ENCODE measurements at regions of chr2 and their contacts with region 1.

Region 1: GRCh38 chr2:219073413-219074129 is 12.8 kb upstream of the IHH start:
- DNase-seq: no peak
- H3K4me3 ChIP-seq: no peak overlapping the region
- H3K27me3 ChIP-seq: no peaks in the 10 kb centered on the region
- CTCF ChIP-seq: peak; percentile 65

Region 2: DNA sequence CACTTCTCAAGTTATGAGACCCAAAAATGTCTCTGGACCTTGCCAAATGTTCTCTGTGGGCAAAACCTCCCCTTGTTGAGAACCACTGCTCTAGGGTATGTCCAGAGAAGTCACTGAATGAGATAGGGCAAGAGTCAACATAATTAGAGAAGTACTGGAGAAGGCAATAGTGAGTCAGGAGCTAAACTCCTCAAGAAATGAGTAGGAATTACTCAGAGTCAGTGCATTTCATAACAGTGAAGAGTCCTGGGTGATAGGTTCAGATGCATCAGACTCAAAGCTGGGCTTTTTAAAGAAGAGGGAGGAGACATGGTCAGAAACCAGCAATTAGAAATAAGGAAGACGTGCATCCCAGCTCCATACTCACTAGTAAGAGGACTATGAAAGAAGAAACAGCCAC is 25.8 kb after region 1 on chr2:
- CTCF ChIA-PET with region 1: interaction called, 15 read pairs
- POLR2A ChIA-PET with region 1: no interaction called
- DNase-seq: peak; percentile 14
- H3K4me3 ChIP-seq: no peak overlapping the region
- H3K27me3 ChIP-seq: no peaks in the 10 kb centered on the region
- CTCF ChIP-seq: no peak

Region 3: DNA sequence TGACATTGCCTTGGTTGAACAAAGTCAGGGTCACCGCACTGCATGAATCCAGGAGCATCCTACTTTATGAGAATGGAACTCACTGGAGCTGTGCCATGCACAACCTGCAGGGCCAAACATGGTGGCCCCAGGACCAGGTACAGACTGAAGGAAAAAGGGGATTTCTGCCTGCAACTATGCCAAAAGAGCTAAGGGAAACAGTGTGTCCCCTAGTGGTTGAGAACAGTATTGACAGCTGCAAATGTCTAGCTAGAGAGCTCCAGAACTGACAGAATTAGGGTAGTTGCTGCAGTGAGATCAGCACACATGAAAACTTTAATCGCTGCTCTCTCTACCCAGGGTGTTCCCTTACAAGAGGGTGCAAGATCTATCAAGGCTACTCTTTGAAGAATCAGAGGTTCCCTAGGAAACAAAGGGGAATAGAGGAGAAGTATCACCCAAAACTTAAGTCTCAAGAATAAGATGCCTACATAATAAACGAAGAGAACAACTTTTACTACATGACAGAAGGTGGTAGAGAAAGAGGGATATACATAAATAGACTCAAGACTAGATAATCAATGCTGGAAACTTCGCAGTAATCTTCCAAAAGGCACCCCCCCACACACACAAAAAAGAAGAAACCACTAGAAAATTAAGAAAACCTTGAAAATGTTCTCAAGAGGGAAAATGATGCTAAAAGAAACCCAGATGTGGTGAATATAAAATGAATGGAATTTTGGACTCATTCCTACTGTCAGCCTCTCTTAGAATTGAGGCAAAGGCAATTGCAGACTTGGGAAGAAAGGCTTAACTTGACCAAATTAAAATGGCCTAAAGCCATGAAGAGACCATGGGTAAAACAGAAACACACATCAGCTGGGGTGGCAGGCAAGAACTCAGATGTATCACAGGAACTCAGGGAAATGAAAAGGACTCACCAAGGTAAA is 30.8 kb after region 1 on chr2:
- CTCF ChIA-PET with region 1: interaction called, 15 read pairs
- POLR2A ChIA-PET with region 1: no interaction called
- DNase-seq: peak; percentile 40
- H3K4me3 ChIP-seq: no peak overlapping the region
- H3K27me3 ChIP-seq: no peaks in the 10 kb centered on the region
- CTCF ChIP-seq: peak; percentile 80

Region 4: DNA sequence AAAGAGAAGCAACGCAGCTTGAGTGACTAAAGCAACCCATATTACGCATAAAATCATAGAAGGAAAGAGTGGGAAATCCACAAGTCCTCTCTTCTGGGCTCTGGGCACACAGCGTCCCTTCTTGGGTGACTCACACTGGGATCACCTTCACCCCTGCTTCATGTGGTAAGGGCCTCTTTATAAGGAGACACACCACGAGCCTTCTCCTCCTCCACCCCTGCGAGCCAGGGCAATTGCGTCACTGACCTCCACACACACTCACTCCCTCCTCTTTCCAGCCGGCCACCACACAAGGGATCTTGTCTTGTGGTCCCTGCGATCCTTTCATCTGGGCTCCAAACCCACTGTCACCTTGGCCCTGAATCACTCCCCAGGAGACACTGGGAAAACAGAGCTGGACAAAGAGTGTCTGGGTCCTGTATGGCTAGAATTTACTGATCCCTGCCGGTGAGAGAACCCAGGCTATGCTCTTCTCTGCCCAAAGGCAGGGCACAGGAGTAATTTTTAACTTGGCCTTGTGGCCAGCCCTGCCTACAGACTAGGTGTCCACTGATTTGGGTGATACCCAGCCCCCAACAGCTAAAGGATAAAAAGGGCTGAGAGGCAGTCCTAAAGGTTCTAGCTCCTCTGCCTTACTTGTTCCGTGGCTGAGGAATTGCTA is 51.8 kb after region 1 on chr2:
- CTCF ChIA-PET with region 1: interaction called, 156 read pairs
- POLR2A ChIA-PET with region 1: no interaction called
- DNase-seq: peak; percentile 11
- H3K4me3 ChIP-seq: no peak overlapping the region
- H3K27me3 ChIP-seq: no peaks in the 10 kb centered on the region
- CTCF ChIP-seq: no peak

Region 5: GRCh38 chr2:219142329-219142728 is 68.8 kb after region 1 on chr2:
- CTCF ChIA-PET with region 1: interaction called, 42 read pairs
- POLR2A ChIA-PET with region 1: no interaction called
- DNase-seq: peak; percentile 76
- H3K4me3 ChIP-seq: no peak overlapping the region
- H3K27me3 ChIP-seq: no peaks in the 10 kb centered on the region
- CTCF ChIP-seq: peak; percentile 59

Region 6: GRCh38 chr2:219155054-219155644 is 81.6 kb after region 1 on chr2:
- CTCF ChIA-PET with region 1: interaction called, 86 read pairs
- POLR2A ChIA-PET with region 1: no interaction called
- DNase-seq: no peak
- H3K4me3 ChIP-seq: no peak overlapping the region
- H3K27me3 ChIP-seq: no peaks in the 10 kb centered on the region
- CTCF ChIP-seq: peak; percentile 48

Region 7: DNA sequence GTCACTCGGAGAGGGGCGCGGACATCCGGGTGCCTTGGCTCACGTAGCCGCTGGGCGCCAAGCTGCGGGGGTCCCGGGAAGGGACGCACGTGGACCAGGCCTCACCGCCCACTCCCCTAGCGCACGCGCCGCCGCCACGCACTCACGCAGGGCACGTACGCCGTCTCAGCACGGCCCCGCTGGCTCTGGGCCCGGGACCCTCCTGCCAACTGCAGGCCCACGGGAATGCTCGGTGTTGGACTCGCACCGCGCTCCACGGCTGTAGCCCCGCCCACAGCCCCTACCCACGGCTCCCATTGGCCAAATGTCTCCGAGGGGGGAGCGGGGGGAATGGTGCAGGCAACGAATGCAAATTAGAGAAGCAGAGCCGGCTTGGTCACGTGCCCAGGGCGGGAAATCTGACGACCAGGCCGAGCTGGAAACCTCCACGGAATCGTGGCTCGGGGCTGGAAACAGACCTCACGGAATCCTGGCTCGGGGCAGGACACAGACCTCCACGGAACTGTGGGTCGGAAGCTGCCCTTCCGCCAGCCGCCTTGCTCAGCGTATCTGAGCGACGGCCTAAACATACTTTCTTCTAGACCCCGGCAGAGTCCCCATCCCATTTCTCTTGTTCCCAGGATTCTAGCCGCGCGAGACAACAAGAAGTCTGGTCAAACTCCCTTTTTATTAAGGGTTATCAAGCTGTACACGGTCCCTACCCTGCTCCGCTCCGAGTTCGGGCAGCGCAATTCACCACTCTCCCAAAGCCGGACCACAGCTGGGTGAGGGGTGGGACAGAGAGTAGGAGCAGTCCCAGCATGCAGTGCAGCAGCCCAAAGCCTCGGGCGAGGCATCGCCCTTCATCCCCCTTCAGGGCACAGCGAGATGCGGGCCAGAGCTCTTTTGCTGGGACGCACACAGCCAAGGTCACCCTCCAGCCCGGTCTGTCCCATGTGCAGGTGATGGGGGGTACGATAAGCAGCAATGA is 145.4 kb after region 1 on chr2 and contains the start of gene ABCB6:
- CTCF ChIA-PET with region 1: no interaction called
- POLR2A ChIA-PET with region 1: no interaction called
- DNase-seq: peak; percentile 54
- H3K4me3 ChIP-seq: peak within 1 kb of the TSS; percentile 43
- H3K27me3 ChIP-seq: no peaks in the 10 kb centered on the region
- CTCF ChIP-seq: no peak
- polyA plus RNA-seq, gene ABCB6: 20.3 and 33.4 TPM in 2 replicates

Measured in BJ (cell line).